ENCODE measurements at regions of chr19 and their contacts with region 1.

Region 1: GRCh38 chr19:13060964-13061927 is 41.4 kb downstream of the LYL1 start:
- DNase-seq: peak; percentile 89
- H3K4me3 ChIP-seq: peak overlapping the region; percentile 68
- H3K27ac ChIP-seq: peak overlapping the region; percentile 98
- H3K4me1 ChIP-seq: peaks cover 100% of the 10 kb centered on the region
- H3K27me3 ChIP-seq: no peaks in the 10 kb centered on the region
- CTCF ChIP-seq: peak; percentile 99

Region 2: DNA sequence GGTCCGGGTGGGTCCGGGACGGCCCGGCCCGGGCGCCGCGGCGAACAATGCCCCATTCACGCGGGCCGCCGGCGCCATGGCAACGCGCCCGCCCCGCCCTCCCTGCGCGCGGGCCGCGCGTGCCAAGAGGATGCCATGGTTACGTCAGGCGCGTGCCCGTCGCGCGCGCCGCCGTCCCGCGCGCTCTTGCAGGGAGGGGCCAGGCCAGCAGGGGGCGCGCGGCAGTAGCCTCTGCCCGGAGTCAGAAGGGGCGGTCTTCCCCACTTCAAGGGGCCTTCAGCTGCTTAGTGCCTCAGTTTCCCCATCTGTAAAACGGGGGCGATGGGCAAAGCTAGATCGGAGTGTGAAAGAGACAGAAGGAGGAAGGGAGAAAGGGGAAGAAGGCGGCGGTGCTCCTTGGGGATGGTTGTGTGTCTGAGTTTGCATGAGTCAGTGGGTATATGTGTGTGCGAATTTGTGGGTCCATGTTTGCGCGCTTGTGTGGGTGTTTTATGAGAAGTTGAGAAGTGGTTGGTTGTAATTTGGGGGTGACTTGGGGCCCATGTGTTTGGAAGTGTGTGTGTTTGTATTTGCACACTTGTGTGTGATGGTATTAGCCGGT is 77.6 kb before region 1 on chr19:
- intact Hi-C with region 1: no loop called
- DNase-seq: peak; percentile 80
- H3K4me3 ChIP-seq: peak overlapping the region; percentile 58
- H3K27ac ChIP-seq: no peak overlapping the region
- H3K4me1 ChIP-seq: peaks cover 24% of the 10 kb centered on the region
- H3K27me3 ChIP-seq: no peaks in the 10 kb centered on the region
- CTCF ChIP-seq: peak; percentile 97

Region 3: GRCh38 chr19:12994701-12995595 is 66.3 kb before region 1 on chr19 and contains the start of gene NFIX:
- intact Hi-C with region 1: loop called (anchors 10 kb)
- DNase-seq: peak; percentile 81
- H3K4me3 ChIP-seq: peak within 1 kb of the TSS; percentile 85
- H3K27ac ChIP-seq: peak within 1 kb of the TSS; percentile 89
- H3K4me1 ChIP-seq: peaks cover 39% of the 10 kb centered on the region
- H3K27me3 ChIP-seq: no peaks in the 10 kb centered on the region
- CTCF ChIP-seq: no peak
- total RNA-seq, gene NFIX: 118 TPM

Region 4: GRCh38 chr19:13117772-13118423 is 56.7 kb after region 1 on chr19 and contains the start of gene NACC1:
- intact Hi-C with region 1: no loop called
- DNase-seq: peak; percentile 91
- H3K4me3 ChIP-seq: peak within 1 kb of the TSS; percentile 87
- H3K27ac ChIP-seq: peak within 1 kb of the TSS; percentile 81
- H3K4me1 ChIP-seq: peaks cover 58% of the 10 kb centered on the region
- H3K27me3 ChIP-seq: no peaks in the 10 kb centered on the region
- CTCF ChIP-seq: no peak
- total RNA-seq, gene NACC1: 35.4 TPM